GM23248 (cell line): ENCODE measurements at regions of chr5 and their contacts with region 1.

Region 1: GRCh38 chr5:154189819-154190594 is 526 bp upstream of the GALNT10 start:
- DNase-seq: peak; percentile 93
- H3K4me3 ChIP-seq: peak overlapping the region; percentile 88
- H3K27ac ChIP-seq: peak overlapping the region; percentile 47
- H3K4me1 ChIP-seq: peaks cover 36% of the 10 kb centered on the region
- H3K27me3 ChIP-seq: no peaks in the 10 kb centered on the region

Region 2: GRCh38 chr5:154002093-154002492 is 187.9 kb before region 1 on chr5:
- in situ Hi-C with region 1: no loop called
- DNase-seq: peak; percentile 5
- H3K4me3 ChIP-seq: no peak overlapping the region
- H3K27ac ChIP-seq: no peak overlapping the region
- H3K4me1 ChIP-seq: 0 out of 2 replicates have a peak, but pooled peaks cover 3% of the 10 kb centered on the region
- H3K27me3 ChIP-seq: no peaks in the 10 kb centered on the region

Region 3: GRCh38 chr5:154072414-154073171 is 117.4 kb before region 1 on chr5:
- in situ Hi-C with region 1: loop called (anchors 10 kb)
- DNase-seq: peak; percentile 74
- H3K4me3 ChIP-seq: no peak overlapping the region
- H3K27ac ChIP-seq: no peak overlapping the region
- H3K4me1 ChIP-seq: peaks cover 2% of the 10 kb centered on the region; the same call in 1 of the 2 replicates
- H3K27me3 ChIP-seq: no peaks in the 10 kb centered on the region

Region 4: DNA sequence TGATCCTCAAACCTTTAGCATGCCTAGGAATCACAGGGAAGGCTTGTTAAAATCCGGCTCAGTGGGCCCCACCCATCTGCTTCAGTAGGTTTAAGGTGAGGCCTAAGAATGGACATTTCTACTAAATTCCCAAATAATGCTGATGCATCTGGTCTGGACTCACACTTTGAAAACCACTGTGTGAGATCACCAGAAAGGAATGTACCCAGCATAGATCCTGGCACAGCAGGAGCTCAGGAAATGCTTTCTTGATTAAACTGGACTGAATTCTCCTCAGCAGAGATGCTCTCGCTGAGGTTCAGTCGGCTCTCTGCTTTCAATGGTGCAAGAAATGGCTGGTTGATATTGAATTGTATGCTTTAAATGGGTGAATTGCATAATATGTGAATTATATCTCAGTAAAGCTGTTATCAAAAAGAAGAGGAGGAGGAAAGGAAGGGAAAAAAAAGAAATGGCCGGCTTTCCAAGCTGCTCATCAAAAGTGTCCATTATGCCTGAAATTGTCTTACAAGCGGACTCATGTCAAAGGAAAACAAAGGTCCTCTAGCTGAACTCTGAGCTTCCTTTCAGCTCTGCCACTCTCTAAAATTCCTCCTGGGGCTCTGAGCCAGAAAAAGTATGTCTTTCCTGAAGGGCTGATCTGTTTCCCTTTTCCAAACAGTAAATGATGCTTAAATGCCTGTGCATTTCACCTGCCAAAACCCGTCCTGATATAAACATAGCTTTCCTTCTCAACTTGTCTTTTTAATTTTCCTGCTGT is 178.2 kb after region 1 on chr5:
- in situ Hi-C with region 1: no loop called
- DNase-seq: peak; percentile 94
- H3K4me3 ChIP-seq: peak overlapping the region; percentile 33
- H3K27ac ChIP-seq: peak overlapping the region; percentile 86
- H3K4me1 ChIP-seq: peaks cover 78% of the 10 kb centered on the region
- H3K27me3 ChIP-seq: no peaks in the 10 kb centered on the region

Region 5: DNA sequence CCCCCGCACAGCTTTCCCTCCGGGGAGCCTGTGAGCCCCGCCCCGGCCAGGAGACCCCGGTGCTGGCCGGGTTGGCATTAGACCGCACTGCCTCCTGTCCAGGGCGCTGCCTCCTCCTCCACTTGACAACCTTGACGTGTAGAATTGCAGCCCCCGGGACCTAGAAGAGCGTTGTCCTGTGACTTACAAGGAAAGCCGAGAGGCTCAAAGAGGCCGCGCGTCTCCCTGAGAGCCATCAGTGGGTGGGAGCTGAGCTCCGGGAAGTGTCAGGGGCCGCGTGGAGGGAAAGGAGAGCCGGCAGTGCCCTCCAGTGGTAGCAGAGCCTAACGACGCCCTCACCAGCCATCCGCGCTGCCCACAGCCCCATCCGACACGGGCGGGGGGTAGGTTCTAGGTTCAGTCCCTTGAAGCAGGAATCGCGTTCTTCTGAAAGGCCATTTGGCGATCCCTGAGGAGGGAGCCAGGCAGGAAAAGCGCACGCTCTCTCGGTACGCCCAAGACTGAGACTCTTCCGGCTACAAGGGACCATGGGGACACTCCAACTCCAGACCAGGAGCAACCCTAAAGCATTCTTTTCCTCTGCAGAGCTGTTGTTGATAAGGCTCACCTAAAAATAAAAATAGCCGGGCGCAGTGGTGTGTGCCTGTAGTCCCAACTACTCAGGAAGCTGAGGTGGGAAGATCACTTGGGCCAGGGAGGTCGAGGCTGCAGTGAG is 215.2 kb after region 1 on chr5:
- in situ Hi-C with region 1: loop called (anchors 25 kb)
- DNase-seq: peak; percentile 93
- H3K4me3 ChIP-seq: peak overlapping the region; percentile 72
- H3K27ac ChIP-seq: no peak overlapping the region
- H3K4me1 ChIP-seq: no peaks in the 10 kb centered on the region
- H3K27me3 ChIP-seq: no peaks in the 10 kb centered on the region